ENCODE measurements at regions of chr1 and their contacts with region 1.

Region 1: GRCh38 chr1:36751536-36751935 is 268.8 kb upstream of the CSF3R start:
- DNase-seq: no peak
- H3K4me3 ChIP-seq: no peak overlapping the region
- H3K4me3 Mint-ChIP-seq: no peak overlapping the region
- H3K27ac Mint-ChIP-seq: no peak overlapping the region
- H3K4me1 ChIP-seq: no peaks in the 10 kb centered on the region
- H3K4me1 Mint-ChIP-seq: no peaks in the 10 kb centered on the region
- H3K27me3 ChIP-seq: no peaks in the 10 kb centered on the region
- H3K27me3 Mint-ChIP-seq: peaks cover 9% of the 10 kb centered on the region
- CTCF ChIP-seq: no peak

Region 2: DNA sequence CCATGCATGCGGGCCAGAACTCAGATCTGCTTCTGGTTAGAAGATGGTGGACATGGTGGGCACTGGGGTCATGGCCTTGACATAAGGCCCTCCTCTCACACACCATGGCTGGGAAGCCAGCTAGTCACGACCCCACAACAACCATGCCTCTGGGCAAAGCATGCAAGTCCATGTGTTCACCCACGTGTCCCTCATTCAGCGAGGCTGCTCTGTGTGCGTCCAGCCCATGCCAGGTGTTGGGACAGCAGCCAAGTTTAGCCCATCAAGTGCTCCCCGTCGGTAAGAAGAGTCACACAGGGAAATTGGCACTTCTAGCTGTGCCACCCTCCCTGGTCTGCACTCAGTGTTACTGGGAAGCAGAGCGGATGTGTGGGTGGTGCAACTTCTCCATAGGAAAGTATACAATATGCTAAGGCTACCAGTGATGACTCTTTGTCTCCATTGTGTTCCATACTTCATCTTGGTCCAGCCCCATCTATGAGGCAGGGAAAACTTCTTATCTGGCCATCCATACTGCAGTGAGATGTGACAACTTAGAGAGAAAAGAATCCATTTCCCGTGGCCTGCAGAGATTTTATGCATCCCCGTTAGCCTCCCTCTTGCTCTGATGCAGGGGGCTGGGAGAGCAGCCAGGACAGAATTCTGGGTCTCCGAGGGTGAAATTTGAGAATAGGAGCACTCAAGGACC is 84.8 kb after region 1 on chr1:
- CTCF ChIA-PET with region 1: no interaction called
- POLR2A ChIA-PET with region 1: no interaction called
- intact Hi-C with region 1: no loop called
- DNase-seq: no peak
- H3K4me3 ChIP-seq: no peak overlapping the region
- H3K4me3 Mint-ChIP-seq: no peak overlapping the region
- H3K27ac Mint-ChIP-seq: no peak overlapping the region
- H3K4me1 ChIP-seq: no peaks in the 10 kb centered on the region
- H3K4me1 Mint-ChIP-seq: no peaks in the 10 kb centered on the region
- H3K27me3 ChIP-seq: no peaks in the 10 kb centered on the region
- H3K27me3 Mint-ChIP-seq: peaks cover 33% of the 10 kb centered on the region
- CTCF ChIP-seq: no peak

Region 3: GRCh38 chr1:36948606-36949005 is 197.1 kb after region 1 on chr1:
- CTCF ChIA-PET with region 1: interaction called, 11 read pairs
- POLR2A ChIA-PET with region 1: no interaction called
- intact Hi-C with region 1: no loop called
- DNase-seq: no peak
- H3K4me3 ChIP-seq: no peak overlapping the region
- H3K4me3 Mint-ChIP-seq: no peak overlapping the region
- H3K27ac Mint-ChIP-seq: no peak overlapping the region
- H3K4me1 ChIP-seq: no peaks in the 10 kb centered on the region
- H3K4me1 Mint-ChIP-seq: no peaks in the 10 kb centered on the region
- H3K27me3 ChIP-seq: no peaks in the 10 kb centered on the region
- H3K27me3 Mint-ChIP-seq: peaks cover 29% of the 10 kb centered on the region
- CTCF ChIP-seq: no peak